SK-N-SH (cell line): ENCODE measurements at regions of chr5 and their contacts with region 1.

Region 1: GRCh38 chr5:123371575-123372179 is 51.5 kb downstream of the CEP120 start:
- DNase-seq: peak; percentile 11
- H3K4me3 ChIP-seq: no peak overlapping the region
- H3K27ac ChIP-seq: no peak overlapping the region
- H3K4me1 ChIP-seq: no peaks in the 10 kb centered on the region
- H3K27me3 ChIP-seq: no peaks in the 10 kb centered on the region
- CTCF ChIP-seq: peak; percentile 60
- EP300 ChIP-seq: no peak
- RAD21 ChIP-seq: peak; percentile 37

Region 2: DNA sequence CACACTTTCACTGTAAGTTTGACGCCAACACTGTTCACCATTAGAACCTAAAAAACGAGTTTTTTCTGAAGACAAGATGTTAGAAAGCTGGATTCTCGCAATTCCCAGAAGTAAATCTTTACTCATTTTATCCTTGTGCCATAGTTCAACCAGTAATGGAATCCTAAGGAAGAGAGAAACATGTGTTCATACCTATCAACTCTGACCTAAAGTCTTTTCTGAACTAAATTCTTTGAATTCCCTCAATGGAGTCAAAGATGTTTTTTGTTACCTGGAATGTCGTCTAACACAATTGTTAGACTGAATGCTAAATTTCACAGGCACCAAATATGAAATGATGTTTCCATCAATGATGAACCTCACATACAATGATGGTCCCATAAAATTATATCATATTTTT is 13.3 kb after region 1 on chr5:
- CTCF ChIA-PET with region 1: interaction called, 11 read pairs
- POLR2A ChIA-PET with region 1: no interaction called
- DNase-seq: no peak
- H3K4me3 ChIP-seq: no peak overlapping the region
- H3K27ac ChIP-seq: no peak overlapping the region
- H3K4me1 ChIP-seq: no peaks in the 10 kb centered on the region
- H3K27me3 ChIP-seq: no peaks in the 10 kb centered on the region
- CTCF ChIP-seq: no peak
- EP300 ChIP-seq: no peak
- RAD21 ChIP-seq: no peak